ENCODE measurements at regions of chr16 and their contacts with region 1.

Region 1: DNA sequence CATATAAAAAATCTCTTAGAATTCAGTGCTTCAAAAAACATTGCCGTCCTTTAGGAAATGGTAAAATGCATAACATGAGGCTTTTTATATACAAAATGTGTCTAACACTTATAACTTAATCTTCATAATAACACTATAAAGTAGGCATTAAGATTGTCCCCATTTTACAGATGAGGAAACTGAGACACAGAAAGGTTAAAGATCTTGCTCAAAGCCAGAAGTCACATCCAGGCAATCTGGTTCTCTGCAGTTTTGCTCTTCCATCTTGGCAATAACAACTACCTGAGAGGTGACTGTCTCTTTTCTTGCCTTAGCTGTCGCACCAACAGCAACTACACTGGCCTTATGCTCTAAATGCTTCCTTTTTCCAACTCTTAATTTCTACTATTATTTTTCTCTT is 24.5 kb downstream of the AP1G1 start:
- DNase-seq: no peak
- ATAC-seq: no peak
- H3K4me3 ChIP-seq: no peak overlapping the region
- H3K27ac ChIP-seq: no peak overlapping the region
- H3K4me1 ChIP-seq: no peaks in the 10 kb centered on the region
- H3K27me3 ChIP-seq: no peaks in the 10 kb centered on the region
- CTCF ChIP-seq: no peak
- EP300 ChIP-seq: no peak
- POLR2A ChIP-seq: no peak
- RAD21 ChIP-seq: no peak

Region 2: GRCh38 chr16:71794943-71795342 is 10.8 kb after region 1 on chr16:
- CTCF ChIA-PET with region 1: no interaction called
- POLR2A ChIA-PET with region 1: interaction called, 10 read pairs
- in situ Hi-C with region 1: no loop called
- intact Hi-C with region 1: no loop called
- DNase-seq: no peak
- ATAC-seq: peak; percentile 41; the same call in 2 of the 3 replicates
- H3K4me3 ChIP-seq: no peak overlapping the region
- H3K27ac ChIP-seq: no peak overlapping the region; the same call in 2 of the 3 replicates
- H3K4me1 ChIP-seq: no peaks in the 10 kb centered on the region; a peak in 2 of 5 replicates
- H3K27me3 ChIP-seq: no peaks in the 10 kb centered on the region
- CTCF ChIP-seq: no peak
- EP300 ChIP-seq: no peak
- POLR2A ChIP-seq: no peak
- RAD21 ChIP-seq: no peak

Region 3: GRCh38 chr16:72060405-72060804 is 276.3 kb after region 1 on chr16:
- CTCF ChIA-PET with region 1: no interaction called
- POLR2A ChIA-PET with region 1: no interaction called
- in situ Hi-C with region 1: no loop called
- intact Hi-C with region 1: no loop called
- DNase-seq: no peak
- ATAC-seq: no peak
- H3K4me3 ChIP-seq: no peak overlapping the region
- H3K27ac ChIP-seq: no peak overlapping the region
- H3K4me1 ChIP-seq: no peaks in the 10 kb centered on the region
- H3K27me3 ChIP-seq: peaks cover 20% of the 10 kb centered on the region in 2 experiments; a peak in 4 of 5 replicates
- CTCF ChIP-seq: no peak
- EP300 ChIP-seq: no peak
- POLR2A ChIP-seq: no peak
- RAD21 ChIP-seq: no peak